Ascending aorta (tissue), 2 donors: ENCODE measurements at regions of chr13 and their contacts with region 1.

Region 1: GRCh38 chr13:102800145-102801041 is 1.5 kb downstream of the BIVM start:
- DNase-seq: peak; percentile 27 to 87
- H3K4me3 ChIP-seq: peak overlapping the region; percentile 86 to 89
- H3K27ac ChIP-seq: peak overlapping the region; percentile 86
- H3K4me1 ChIP-seq: peaks cover 7% of the 10 kb centered on the region in 2 donors
- H3K27me3 ChIP-seq: no peaks in the 10 kb centered on the region
- CTCF ChIP-seq: peak; percentile 54 to 74 (median 62)

Region 2: DNA sequence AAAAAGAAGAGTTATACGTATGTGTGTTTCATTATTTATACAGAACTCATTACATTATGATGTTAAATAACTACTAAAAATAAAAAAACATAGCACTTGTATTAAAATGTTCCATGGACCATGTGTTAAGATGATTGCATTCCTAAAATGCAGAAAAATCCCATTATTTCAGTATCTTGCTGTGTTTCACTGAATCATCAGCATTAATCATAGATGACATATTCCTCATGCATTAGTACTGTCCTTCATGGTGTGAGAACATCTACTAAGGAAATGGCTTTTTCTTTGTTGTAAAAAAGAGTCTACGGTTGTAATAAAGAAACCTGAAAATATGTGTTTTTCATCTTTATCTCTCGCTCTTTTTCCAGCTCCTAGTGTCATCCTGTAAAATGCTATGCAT is 815.1 kb before region 1 on chr13:
- intact Hi-C with region 1: no loop called
- DNase-seq: no peak
- H3K4me3 ChIP-seq: no peak overlapping the region
- H3K27ac ChIP-seq: no peak overlapping the region
- H3K4me1 ChIP-seq: no peaks in the 10 kb centered on the region
- H3K27me3 ChIP-seq: no peaks in the 10 kb centered on the region
- CTCF ChIP-seq: no peak

Region 3: DNA sequence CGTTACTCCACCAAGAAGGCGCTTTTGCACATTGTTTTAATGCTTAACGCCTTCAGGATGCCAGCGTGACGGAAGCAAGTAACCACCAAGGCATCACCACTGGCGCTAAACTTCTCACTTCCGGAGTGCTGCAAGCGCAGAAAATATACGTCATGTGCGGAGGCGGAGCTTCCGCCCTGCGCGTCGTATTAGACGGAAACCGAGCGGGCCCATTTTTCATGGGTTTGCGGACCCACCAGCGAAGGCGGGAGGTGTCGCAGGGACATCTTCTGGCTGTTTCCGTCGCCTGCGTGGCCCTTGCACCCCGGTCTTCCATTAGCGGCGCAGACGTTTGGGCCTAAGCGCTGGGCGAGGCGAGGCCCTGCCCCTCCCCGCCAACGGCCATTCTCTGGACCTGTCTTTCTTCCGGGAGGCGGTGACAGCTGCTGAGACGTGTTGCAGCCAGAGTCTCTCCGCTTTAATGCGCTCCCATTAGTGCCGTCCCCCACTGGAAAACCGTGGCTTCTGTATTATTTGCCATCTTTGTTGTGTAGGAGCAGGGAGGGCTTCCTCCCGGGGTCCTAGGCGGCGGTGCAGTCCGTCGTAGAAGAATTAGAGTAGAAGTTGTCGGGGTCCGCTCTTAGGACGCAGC is 45.4 kb after region 1 on chr13 and contains the start of gene ERCC5:
- intact Hi-C with region 1: loop called (anchors 1 kb)
- DNase-seq: peak; percentile 74 to 96
- H3K4me3 ChIP-seq: peak within 1 kb of the TSS; percentile 69 to 91
- H3K27ac ChIP-seq: peak within 1 kb of the TSS; percentile 95
- H3K4me1 ChIP-seq: peaks cover 0 to 4% of the 10 kb centered on the region in 2 donors
- H3K27me3 ChIP-seq: no peaks in the 10 kb centered on the region
- CTCF ChIP-seq: no peak
- total RNA-seq, gene ERCC5: 26.2 TPM